Ascending aorta (tissue), 2 donors: ENCODE measurements at regions of chr15 and their contacts with region 1.

Region 1: DNA sequence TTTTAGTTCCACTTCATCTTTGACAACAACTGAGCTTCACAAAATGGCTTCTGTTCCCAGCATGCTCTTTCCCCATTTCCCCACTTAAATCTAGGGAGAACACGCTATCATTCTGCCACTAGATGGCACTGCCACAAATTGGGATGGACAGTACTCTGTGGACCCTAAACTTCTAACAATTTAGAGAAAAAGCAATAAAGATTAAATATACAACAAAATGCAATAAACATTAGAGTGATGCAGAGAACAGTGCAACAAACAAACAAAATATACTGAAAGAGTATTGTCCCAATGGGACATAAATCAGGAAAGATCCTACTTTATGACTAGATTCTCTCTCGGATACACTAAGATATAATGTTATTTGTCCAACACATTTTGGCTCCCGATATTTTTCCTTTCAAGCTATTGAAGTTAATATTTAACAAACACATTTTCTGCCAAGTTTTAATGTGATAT is 169.7 kb upstream of the TMCO5A start:
- DNase-seq: no peak
- H3K4me3 ChIP-seq: no peak overlapping the region
- H3K27ac ChIP-seq: no peak overlapping the region
- H3K4me1 ChIP-seq: no peaks in the 10 kb centered on the region
- H3K27me3 ChIP-seq: no peaks in the 10 kb centered on the region
- CTCF ChIP-seq: peak; percentile 9 to 44 (median 33)

Region 2: GRCh38 chr15:37880009-37880834 is 115.5 kb after region 1 on chr15:
- intact Hi-C with region 1: loop called (anchors 5 kb)
- DNase-seq: no peak
- H3K4me3 ChIP-seq: no peak overlapping the region
- H3K27ac ChIP-seq: no peak overlapping the region
- H3K4me1 ChIP-seq: peaks cover 0 to 1% of the 10 kb centered on the region in 2 donors
- H3K27me3 ChIP-seq: no peaks in the 10 kb centered on the region
- CTCF ChIP-seq: peak; percentile 34 to 62 (median 59)

Region 3: GRCh38 chr15:38187630-38188313 is 423.0 kb after region 1 on chr15:
- intact Hi-C with region 1: no loop called
- DNase-seq: no peak
- H3K4me3 ChIP-seq: no peak overlapping the region
- H3K27ac ChIP-seq: no peak overlapping the region
- H3K4me1 ChIP-seq: no peaks in the 10 kb centered on the region
- H3K27me3 ChIP-seq: no peaks in the 10 kb centered on the region
- CTCF ChIP-seq: no peak

Region 4: GRCh38 chr15:38201714-38202113 is 437.0 kb after region 1 on chr15:
- intact Hi-C with region 1: no loop called
- DNase-seq: no peak
- H3K4me3 ChIP-seq: no peak overlapping the region
- H3K27ac ChIP-seq: no peak overlapping the region
- H3K4me1 ChIP-seq: no peaks in the 10 kb centered on the region
- H3K27me3 ChIP-seq: no peaks in the 10 kb centered on the region
- CTCF ChIP-seq: no peak